T-cell (primary cell): ENCODE measurements at regions of chr1 and their contacts with region 1.

Region 1: GRCh38 chr1:76124196-76124595 is 49.6 kb downstream of the ST6GALNAC3 start:
- DNase-seq: no peak
- ATAC-seq: no peak
- H3K4me3 ChIP-seq: no peak overlapping the region
- H3K4me3 Mint-ChIP-seq: no peak overlapping the region
- H3K27ac ChIP-seq: no peak overlapping the region
- H3K27ac Mint-ChIP-seq: no peak overlapping the region
- H3K4me1 ChIP-seq: no peaks in the 10 kb centered on the region
- H3K4me1 Mint-ChIP-seq: no peaks in the 10 kb centered on the region
- H3K27me3 ChIP-seq: no peaks in the 10 kb centered on the region
- H3K27me3 Mint-ChIP-seq: no peaks in the 10 kb centered on the region

Region 2: GRCh38 chr1:75712306-75712705 is 411.9 kb before region 1 on chr1:
- CTCF ChIA-PET with region 1: no interaction called
- POLR2A ChIA-PET with region 1: no interaction called
- DNase-seq: no peak
- ATAC-seq: no peak
- H3K4me3 ChIP-seq: no peak overlapping the region
- H3K4me3 Mint-ChIP-seq: no peak overlapping the region
- H3K27ac ChIP-seq: no peak overlapping the region
- H3K27ac Mint-ChIP-seq: no peak overlapping the region
- H3K4me1 ChIP-seq: no peaks in the 10 kb centered on the region
- H3K4me1 Mint-ChIP-seq: no peaks in the 10 kb centered on the region
- H3K27me3 ChIP-seq: peaks cover 0 to 6% of the 10 kb centered on the region in 2 experiments
- H3K27me3 Mint-ChIP-seq: peaks cover 9 to 23% of the 10 kb centered on the region in 2 donors

Region 3: GRCh38 chr1:76425201-76426145 is 301.3 kb after region 1 on chr1:
- CTCF ChIA-PET with region 1: interaction called in 1 of 2 experiments, 12 read pairs
- POLR2A ChIA-PET with region 1: no interaction called
- DNase-seq: no peak
- ATAC-seq: no peak
- H3K4me3 ChIP-seq: no peak overlapping the region
- H3K4me3 Mint-ChIP-seq: no peak overlapping the region
- H3K27ac ChIP-seq: no peak overlapping the region
- H3K27ac Mint-ChIP-seq: no peak overlapping the region
- H3K4me1 ChIP-seq: no peaks in the 10 kb centered on the region
- H3K4me1 Mint-ChIP-seq: no peaks in the 10 kb centered on the region
- H3K27me3 ChIP-seq: no peaks in the 10 kb centered on the region
- H3K27me3 Mint-ChIP-seq: no peaks in the 10 kb centered on the region